Activated naive CD4-positive, alpha-beta T cell treated with anti-CD3 and anti-CD28 coated beads for 36 hours (primary cell): ENCODE measurements at regions of chr2 and their contacts with region 1.

Region 1: DNA sequence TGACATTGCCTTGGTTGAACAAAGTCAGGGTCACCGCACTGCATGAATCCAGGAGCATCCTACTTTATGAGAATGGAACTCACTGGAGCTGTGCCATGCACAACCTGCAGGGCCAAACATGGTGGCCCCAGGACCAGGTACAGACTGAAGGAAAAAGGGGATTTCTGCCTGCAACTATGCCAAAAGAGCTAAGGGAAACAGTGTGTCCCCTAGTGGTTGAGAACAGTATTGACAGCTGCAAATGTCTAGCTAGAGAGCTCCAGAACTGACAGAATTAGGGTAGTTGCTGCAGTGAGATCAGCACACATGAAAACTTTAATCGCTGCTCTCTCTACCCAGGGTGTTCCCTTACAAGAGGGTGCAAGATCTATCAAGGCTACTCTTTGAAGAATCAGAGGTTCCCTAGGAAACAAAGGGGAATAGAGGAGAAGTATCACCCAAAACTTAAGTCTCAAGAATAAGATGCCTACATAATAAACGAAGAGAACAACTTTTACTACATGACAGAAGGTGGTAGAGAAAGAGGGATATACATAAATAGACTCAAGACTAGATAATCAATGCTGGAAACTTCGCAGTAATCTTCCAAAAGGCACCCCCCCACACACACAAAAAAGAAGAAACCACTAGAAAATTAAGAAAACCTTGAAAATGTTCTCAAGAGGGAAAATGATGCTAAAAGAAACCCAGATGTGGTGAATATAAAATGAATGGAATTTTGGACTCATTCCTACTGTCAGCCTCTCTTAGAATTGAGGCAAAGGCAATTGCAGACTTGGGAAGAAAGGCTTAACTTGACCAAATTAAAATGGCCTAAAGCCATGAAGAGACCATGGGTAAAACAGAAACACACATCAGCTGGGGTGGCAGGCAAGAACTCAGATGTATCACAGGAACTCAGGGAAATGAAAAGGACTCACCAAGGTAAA is 43.6 kb upstream of the IHH start:
- DNase-seq: peak; percentile 45
- H3K4me3 Mint-ChIP-seq: no peak overlapping the region
- H3K27ac Mint-ChIP-seq: no peak overlapping the region
- H3K4me1 Mint-ChIP-seq: peaks cover 29% of the 10 kb centered on the region
- H3K27me3 Mint-ChIP-seq: no peaks in the 10 kb centered on the region

Region 2: GRCh38 chr2:219073413-219074129 is 30.8 kb before region 1 on chr2:
- CTCF ChIA-PET with region 1: interaction called, 41 read pairs
- intact Hi-C with region 1: no loop called
- DNase-seq: peak; percentile 30
- H3K4me3 Mint-ChIP-seq: no peak overlapping the region
- H3K27ac Mint-ChIP-seq: no peak overlapping the region
- H3K4me1 Mint-ChIP-seq: no peaks in the 10 kb centered on the region
- H3K27me3 Mint-ChIP-seq: no peaks in the 10 kb centered on the region

Region 3: GRCh38 chr2:219087361-219087760 is 17.0 kb before region 1 on chr2:
- CTCF ChIA-PET with region 1: interaction called, 10 read pairs
- intact Hi-C with region 1: no loop called
- DNase-seq: no peak
- H3K4me3 Mint-ChIP-seq: no peak overlapping the region
- H3K27ac Mint-ChIP-seq: no peak overlapping the region
- H3K4me1 Mint-ChIP-seq: peaks cover 8% of the 10 kb centered on the region
- H3K27me3 Mint-ChIP-seq: no peaks in the 10 kb centered on the region

Region 4: GRCh38 chr2:219119422-219120043 is 15.2 kb after region 1 on chr2:
- CTCF ChIA-PET with region 1: interaction called, 52 read pairs
- intact Hi-C with region 1: no loop called
- DNase-seq: peak; percentile 78
- H3K4me3 Mint-ChIP-seq: no peak overlapping the region
- H3K27ac Mint-ChIP-seq: no peak overlapping the region
- H3K4me1 Mint-ChIP-seq: peaks cover 4% of the 10 kb centered on the region
- H3K27me3 Mint-ChIP-seq: no peaks in the 10 kb centered on the region